Activated naive CD4-positive, alpha-beta T cell treated with anti-CD3 and anti-CD28 coated beads for 36 hours (primary cell): ENCODE measurements at regions of chr5 and their contacts with region 1.

Region 1: GRCh38 chr5:141512390-141512910 is 23.6 kb downstream of the PCDHGC5 start:
- DNase-seq: peak; percentile 92
- H3K4me3 Mint-ChIP-seq: peak overlapping the region; percentile 73
- H3K27ac Mint-ChIP-seq: no peak overlapping the region
- H3K4me1 Mint-ChIP-seq: peaks cover 33% of the 10 kb centered on the region
- H3K27me3 Mint-ChIP-seq: no peaks in the 10 kb centered on the region

Region 2: GRCh38 chr5:141320225-141321169 is 192.0 kb before region 1 on chr5 and contains the start of gene TAF7:
- CTCF ChIA-PET with region 1: interaction called, 6 read pairs
- intact Hi-C with region 1: loop called (anchors 1 kb)
- DNase-seq: peak; percentile 95
- H3K4me3 Mint-ChIP-seq: peak within 1 kb of the TSS; percentile 97
- H3K27ac Mint-ChIP-seq: peak within 1 kb of the TSS; percentile 99
- H3K4me1 Mint-ChIP-seq: peaks cover 25% of the 10 kb centered on the region
- H3K27me3 Mint-ChIP-seq: no peaks in the 10 kb centered on the region
- total RNA-seq, gene TAF7: 57.0 to 57.9 TPM

Region 3: DNA sequence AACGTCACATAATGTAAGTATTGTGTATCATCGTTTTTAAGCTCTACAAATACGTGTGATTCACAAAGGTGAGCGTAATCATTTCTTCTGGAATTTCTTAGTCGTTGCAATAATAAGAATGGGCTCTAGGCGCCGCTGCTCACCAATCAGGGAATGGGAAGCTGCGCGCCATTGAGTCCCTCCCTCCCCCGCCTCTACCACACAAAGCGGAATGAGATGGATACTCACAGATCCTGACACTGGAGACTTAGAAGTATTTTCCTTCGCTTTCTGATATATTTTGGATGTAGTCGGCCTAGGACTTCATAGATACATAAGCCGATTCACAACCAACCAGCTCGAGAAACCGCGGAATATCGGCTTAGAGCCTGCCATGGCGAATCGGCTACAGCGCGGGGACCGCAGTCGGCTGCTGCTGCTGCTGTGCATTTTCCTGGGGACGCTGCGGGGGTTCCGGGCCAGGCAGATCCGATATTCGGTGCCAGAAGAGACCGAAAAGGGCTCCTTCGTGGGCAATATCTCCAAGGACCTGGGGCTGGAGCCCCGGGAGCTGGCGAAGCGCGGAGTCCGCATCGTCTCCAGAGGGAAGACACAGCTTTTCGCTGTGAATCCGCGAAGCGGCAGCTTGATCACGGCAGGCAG is 91.5 kb before region 1 on chr5 and contains the start of gene PCDHGA11:
- CTCF ChIA-PET with region 1: interaction called, 45 read pairs
- intact Hi-C with region 1: loop called (anchors 2 kb)
- DNase-seq: peak; percentile 71
- H3K4me3 Mint-ChIP-seq: peak within 1 kb of the TSS; percentile 77
- H3K27ac Mint-ChIP-seq: no peak within 1 kb of the TSS
- H3K4me1 Mint-ChIP-seq: peaks cover 3% of the 10 kb centered on the region
- H3K27me3 Mint-ChIP-seq: peaks cover 69% of the 10 kb centered on the region
- total RNA-seq, gene PCDHGA11: 0.10 to 0.17 TPM

Region 4: DNA sequence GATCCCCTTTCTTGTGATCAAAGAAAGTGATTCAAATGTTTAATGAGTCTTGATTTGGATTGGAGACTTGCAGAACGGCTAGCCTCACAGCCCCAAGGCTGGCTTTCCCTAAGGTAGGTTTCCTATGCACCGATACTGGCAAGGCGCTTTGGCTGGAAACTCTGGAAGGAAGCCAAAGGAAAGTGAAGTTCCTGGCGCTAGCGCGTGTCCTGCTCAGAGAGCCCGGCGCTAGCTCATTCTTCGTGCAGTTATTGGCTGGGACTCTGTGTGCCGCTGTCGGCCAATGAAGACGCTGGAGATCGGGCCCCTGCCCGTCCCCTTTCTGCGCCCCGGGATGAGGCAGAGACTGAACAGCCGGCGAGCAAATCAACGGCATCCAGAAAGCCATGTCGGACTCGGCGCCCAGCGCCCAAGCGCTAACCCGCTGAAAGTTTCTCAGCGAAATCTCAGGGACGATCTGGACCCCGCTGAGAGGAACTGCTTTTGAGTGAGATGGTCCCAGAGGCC is 36.8 kb before region 1 on chr5 and contains the start of gene PCDHGC3:
- CTCF ChIA-PET with region 1: interaction called, 9 read pairs
- intact Hi-C with region 1: loop called (anchors 1 kb)
- DNase-seq: peak; percentile 72
- H3K4me3 Mint-ChIP-seq: peak within 1 kb of the TSS; percentile 86
- H3K27ac Mint-ChIP-seq: no peak within 1 kb of the TSS
- H3K4me1 Mint-ChIP-seq: peaks cover 20% of the 10 kb centered on the region
- H3K27me3 Mint-ChIP-seq: peaks cover 50% of the 10 kb centered on the region
- total RNA-seq, gene PCDHGC3: 0.12 to 0.17 TPM

Region 5: DNA sequence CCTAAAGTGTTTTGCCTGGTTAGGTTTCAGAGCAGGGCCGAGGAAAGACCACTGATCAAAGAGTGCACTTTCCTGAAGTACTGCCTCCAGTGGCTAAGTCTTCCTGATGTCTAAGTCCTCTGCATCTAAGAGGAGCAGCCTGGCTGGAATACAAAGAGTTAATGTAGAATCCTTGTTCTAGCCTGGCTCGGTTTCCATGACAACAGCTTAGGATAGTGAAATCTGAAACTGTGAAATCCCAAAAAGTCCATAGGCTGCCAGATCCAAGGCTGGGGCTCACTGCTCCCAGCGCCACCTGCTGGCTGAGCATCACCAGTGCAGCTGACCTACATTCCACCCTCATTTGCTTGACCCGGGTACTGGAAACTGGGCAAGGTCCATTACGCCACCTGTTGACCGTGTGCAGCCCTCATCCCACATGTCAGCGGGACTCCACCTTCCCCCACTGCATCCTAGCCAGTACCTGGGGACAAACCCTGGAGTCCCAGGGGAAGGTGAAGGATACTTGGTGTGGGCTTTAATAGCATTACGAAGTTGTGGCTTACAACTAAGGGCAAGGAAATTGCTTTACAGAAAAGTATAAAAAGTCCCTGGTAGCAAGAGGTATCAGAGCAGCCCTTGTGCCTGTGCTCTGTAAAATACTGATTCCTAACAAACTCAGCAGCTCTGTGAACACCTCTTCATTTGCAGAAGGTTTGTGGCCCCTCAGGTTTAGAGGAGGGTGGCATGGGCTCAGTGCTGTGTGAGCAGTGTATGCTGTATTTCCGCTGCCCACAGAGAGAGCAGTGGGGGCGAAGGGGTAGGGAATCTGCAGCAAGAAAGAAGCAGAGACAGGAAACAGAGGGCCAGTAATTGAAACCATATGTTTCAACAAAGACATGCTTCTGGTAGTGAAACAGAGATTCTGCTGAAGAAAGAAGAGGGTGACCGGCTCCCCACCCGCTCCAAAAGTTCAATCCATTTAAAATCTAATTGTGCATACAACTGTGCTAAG is 12.5 kb after region 1 on chr5:
- CTCF ChIA-PET with region 1: interaction called, 96 read pairs
- intact Hi-C with region 1: loop called (anchors 1 kb)
- DNase-seq: peak; percentile 57
- H3K4me3 Mint-ChIP-seq: no peak overlapping the region
- H3K27ac Mint-ChIP-seq: no peak overlapping the region
- H3K4me1 Mint-ChIP-seq: peaks cover 32% of the 10 kb centered on the region
- H3K27me3 Mint-ChIP-seq: no peaks in the 10 kb centered on the region

Region 6: GRCh38 chr5:141968914-141969608 is 456.6 kb after region 1 on chr5 and contains the start of gene RNF14:
- CTCF ChIA-PET with region 1: no interaction called
- intact Hi-C with region 1: no loop called
- DNase-seq: peak; percentile 96
- H3K4me3 Mint-ChIP-seq: peak within 1 kb of the TSS; percentile 93
- H3K27ac Mint-ChIP-seq: peak within 1 kb of the TSS; percentile 91
- H3K4me1 Mint-ChIP-seq: peaks cover 37% of the 10 kb centered on the region
- H3K27me3 Mint-ChIP-seq: no peaks in the 10 kb centered on the region
- total RNA-seq, gene RNF14: 29.8 to 35.6 TPM